ENCODE measurements at regions of chr6 and their contacts with region 1.

Region 1: GRCh38 chr6:47780510-47781356 is 1.1 kb upstream of the OPN5 start:
- DNase-seq: no peak
- H3K4me3 ChIP-seq: no peak overlapping the region
- H3K27ac ChIP-seq: no peak overlapping the region
- H3K4me1 ChIP-seq: peaks cover 2% of the 10 kb centered on the region
- H3K27me3 ChIP-seq: no peaks in the 10 kb centered on the region
- CTCF ChIP-seq: peak in 1 of 3 donors; percentile 11
- EP300 ChIP-seq: no peak
- POLR2A ChIP-seq: no peak

Region 2: DNA sequence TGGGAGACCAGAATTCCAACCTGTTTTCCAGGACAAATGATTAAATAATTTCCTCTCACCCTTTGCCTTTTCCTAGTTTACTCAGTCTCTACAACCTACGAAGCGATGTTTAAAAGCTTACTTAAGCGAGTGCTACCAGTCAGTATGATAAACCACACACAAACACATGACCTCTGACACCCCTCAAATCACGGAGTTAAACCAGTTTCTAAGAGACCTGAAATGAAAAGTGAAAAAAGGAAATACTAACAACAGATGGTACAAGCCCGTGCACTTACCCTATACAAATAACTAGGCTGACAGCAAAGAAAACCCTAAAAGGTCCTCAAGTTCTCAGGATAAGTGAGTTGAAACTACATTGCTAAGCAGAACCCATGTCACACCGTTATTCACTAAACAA is 478.7 kb before region 1 on chr6:
- intact Hi-C with region 1: no loop called
- DNase-seq: no peak
- H3K4me3 ChIP-seq: no peak overlapping the region
- H3K27ac ChIP-seq: no peak overlapping the region
- H3K4me1 ChIP-seq: no peaks in the 10 kb centered on the region
- H3K27me3 ChIP-seq: no peaks in the 10 kb centered on the region
- CTCF ChIP-seq: no peak
- EP300 ChIP-seq: no peak
- POLR2A ChIP-seq: no peak

Region 3: GRCh38 chr6:47413752-47414422 is 366.8 kb before region 1 on chr6:
- intact Hi-C with region 1: loop called in 1 of 4 experiments (anchors 5 kb)
- DNase-seq: peak in 2 of 5 donors; percentile 12 to 24
- H3K4me3 ChIP-seq: peak overlapping the region; percentile 27
- H3K27ac ChIP-seq: no peak overlapping the region
- H3K4me1 ChIP-seq: no peaks in the 10 kb centered on the region
- H3K27me3 ChIP-seq: no peaks in the 10 kb centered on the region
- CTCF ChIP-seq: peak; percentile 64 to 73 (median 68)
- EP300 ChIP-seq: no peak
- POLR2A ChIP-seq: no peak

Region 4: GRCh38 chr6:47626782-47627181 is 154.0 kb before region 1 on chr6:
- intact Hi-C with region 1: loop called in 1 of 4 experiments (anchors 5 kb)
- DNase-seq: no peak
- H3K4me3 ChIP-seq: no peak overlapping the region
- H3K27ac ChIP-seq: no peak overlapping the region
- H3K4me1 ChIP-seq: no peaks in the 10 kb centered on the region
- H3K27me3 ChIP-seq: no peaks in the 10 kb centered on the region
- CTCF ChIP-seq: no peak
- EP300 ChIP-seq: no peak
- POLR2A ChIP-seq: no peak

Region 5: DNA sequence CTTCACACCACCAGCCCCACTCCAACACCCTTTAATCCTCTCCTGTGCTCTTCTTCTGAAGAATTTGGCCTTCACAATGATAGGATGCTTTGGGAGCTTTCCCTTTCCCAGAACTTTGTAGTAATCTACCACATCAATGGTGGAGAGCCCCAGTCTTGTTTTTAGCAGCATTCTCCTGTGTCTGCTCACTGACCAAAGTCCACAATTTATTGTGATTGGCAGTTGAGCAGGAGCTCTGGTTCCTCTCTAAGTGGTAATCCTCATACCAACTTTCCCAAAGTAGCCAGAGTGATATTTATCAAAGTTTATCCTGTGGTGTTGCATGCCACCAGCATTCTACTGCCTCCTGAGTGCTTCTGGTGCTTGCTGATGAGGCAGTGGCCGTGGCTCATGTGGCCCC is 27.9 kb before region 1 on chr6:
- intact Hi-C with region 1: no loop called
- DNase-seq: no peak
- H3K4me3 ChIP-seq: no peak overlapping the region
- H3K27ac ChIP-seq: no peak overlapping the region
- H3K4me1 ChIP-seq: no peaks in the 10 kb centered on the region
- H3K27me3 ChIP-seq: no peaks in the 10 kb centered on the region
- CTCF ChIP-seq: no peak
- EP300 ChIP-seq: no peak
- POLR2A ChIP-seq: no peak

Region 6: DNA sequence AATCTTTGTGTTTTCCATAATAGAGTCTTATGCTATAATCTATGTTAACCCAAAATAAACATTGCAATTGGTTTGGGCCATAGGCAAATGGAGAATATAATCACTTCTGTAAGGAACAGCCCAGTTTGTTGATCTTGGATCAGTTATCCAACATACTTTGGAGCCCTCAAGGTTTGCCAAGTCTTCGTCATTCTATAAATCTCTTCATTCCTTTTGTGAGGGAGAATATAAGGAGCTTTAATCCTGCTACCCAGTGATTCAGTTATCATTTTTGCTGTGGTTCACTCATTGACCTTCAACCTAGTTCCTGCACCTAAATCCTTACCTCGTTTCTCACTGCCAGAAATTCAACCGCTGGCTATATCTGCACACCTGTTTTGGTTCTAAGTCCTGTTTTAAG is 830.6 kb after region 1 on chr6:
- intact Hi-C with region 1: no loop called
- DNase-seq: no peak
- H3K4me3 ChIP-seq: no peak overlapping the region
- H3K27ac ChIP-seq: no peak overlapping the region
- H3K4me1 ChIP-seq: no peaks in the 10 kb centered on the region
- H3K27me3 ChIP-seq: no peaks in the 10 kb centered on the region
- CTCF ChIP-seq: no peak
- EP300 ChIP-seq: no peak
- POLR2A ChIP-seq: no peak

Measured in ovary (tissue), 10 donors.